ENCODE measurements at regions of chr14 and their contacts with region 1.

Region 1: GRCh38 chr14:103628684-103629502 is at the start of gene KLC1:
- H3K4me3 ChIP-seq: peak within 1 kb of the TSS; percentile 94
- H3K27ac ChIP-seq: peak within 1 kb of the TSS; percentile 90
- H3K4me1 ChIP-seq: peaks cover 3% of the 10 kb centered on the region
- CTCF ChIP-seq: 0 out of 2 replicates have a peak, but pooled peaks have one; percentile 5

Region 2: DNA sequence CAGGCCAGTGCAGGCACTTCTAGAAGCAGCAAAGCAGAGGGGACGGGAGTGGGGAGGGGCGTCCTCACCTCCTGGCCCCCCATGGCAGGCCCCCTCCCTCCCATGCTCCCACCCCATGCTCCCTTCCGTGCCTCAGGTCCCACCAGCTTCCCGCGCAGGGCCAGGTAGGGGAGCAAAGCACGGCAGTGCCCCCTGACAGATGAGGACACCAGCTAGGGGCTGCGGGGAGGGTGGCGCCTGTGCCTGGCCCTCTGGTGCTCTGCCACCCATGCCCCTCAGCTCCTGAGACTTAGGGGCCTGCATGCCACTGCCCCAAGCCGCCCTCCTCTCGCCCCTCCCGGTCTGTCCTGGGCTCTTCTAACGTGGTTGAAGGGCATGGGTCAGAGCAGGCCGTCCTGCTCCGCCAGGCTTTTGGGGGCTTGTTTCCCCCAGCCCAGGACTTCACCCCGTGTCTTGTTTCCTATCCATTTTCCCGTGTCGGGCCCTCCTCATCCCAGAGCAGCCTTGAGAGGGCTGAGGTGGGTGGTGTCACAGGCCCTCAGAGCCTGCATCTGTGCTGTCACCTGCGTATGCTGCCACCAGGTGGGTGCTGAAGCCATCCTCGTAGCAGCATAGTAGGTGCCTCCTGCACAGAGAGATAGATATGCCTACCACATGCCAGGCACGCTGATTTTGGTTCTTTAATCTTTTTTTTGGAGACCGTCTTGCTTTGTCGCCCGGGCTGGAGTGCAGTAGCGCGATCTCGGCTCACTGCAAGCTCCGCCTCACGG is 89.7 kb before region 1 on chr14:
- CTCF ChIA-PET with region 1: no interaction called
- POLR2A ChIA-PET with region 1: no interaction called
- H3K4me3 ChIP-seq: no peak overlapping the region
- H3K27ac ChIP-seq: no peak overlapping the region
- H3K4me1 ChIP-seq: 0 out of 2 replicates have a peak, but pooled peaks cover 5% of the 10 kb centered on the region
- CTCF ChIP-seq: 0 out of 2 replicates have a peak, but pooled peaks have one; percentile 20

Region 3: GRCh38 chr14:103606963-103607668 is 21.8 kb before region 1 on chr14:
- CTCF ChIA-PET with region 1: interaction called, 3 read pairs
- POLR2A ChIA-PET with region 1: interaction called, 10 read pairs
- H3K4me3 ChIP-seq: 0 out of 2 replicates have a peak overlapping the region, but pooled peaks have one; percentile 2
- H3K27ac ChIP-seq: no peak overlapping the region
- H3K4me1 ChIP-seq: no peaks in the 10 kb centered on the region; the same call in 1 of the 2 replicates
- CTCF ChIP-seq: peak; percentile 81

Region 4: DNA sequence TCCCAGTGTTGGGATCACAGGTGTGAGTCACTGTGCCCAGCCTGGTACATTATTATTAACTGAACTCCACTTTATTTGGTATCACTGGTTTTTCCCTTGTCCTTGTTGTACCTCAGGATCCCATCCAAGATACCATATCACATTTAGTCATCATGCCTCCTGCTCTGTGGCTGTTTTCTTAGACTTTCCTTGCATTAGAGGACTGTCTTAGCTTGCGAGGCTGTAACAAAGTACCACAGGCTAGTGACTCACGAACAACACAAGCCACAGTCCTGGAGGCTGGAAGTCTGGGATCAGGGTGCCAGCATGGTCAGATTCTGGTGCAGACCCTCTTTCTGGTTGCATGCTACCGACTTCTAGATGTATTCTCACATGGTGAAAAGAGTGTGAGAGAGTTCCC is 12.3 kb after region 1 on chr14:
- CTCF ChIA-PET with region 1: no interaction called
- POLR2A ChIA-PET with region 1: no interaction called
- H3K4me3 ChIP-seq: no peak overlapping the region
- H3K27ac ChIP-seq: no peak overlapping the region
- H3K4me1 ChIP-seq: no peaks in the 10 kb centered on the region
- CTCF ChIP-seq: no peak